SK-N-SH (cell line): ENCODE measurements at regions of chr3 and their contacts with region 1.

Region 1: GRCh38 chr3:195522254-195523023 is 20.7 kb downstream of the PPP1R2 start:
- DNase-seq: peak; percentile 61
- H3K4me3 ChIP-seq: no peak overlapping the region
- H3K27ac ChIP-seq: no peak overlapping the region
- H3K4me1 ChIP-seq: no peaks in the 10 kb centered on the region
- H3K27me3 ChIP-seq: no peaks in the 10 kb centered on the region
- CTCF ChIP-seq: peak; percentile 85
- EP300 ChIP-seq: no peak
- RAD21 ChIP-seq: peak; percentile 87

Region 2: GRCh38 chr3:195542698-195543499 is 20.5 kb after region 1 on chr3 and contains the start of gene PPP1R2:
- CTCF ChIA-PET with region 1: interaction called, 10 read pairs
- POLR2A ChIA-PET with region 1: no interaction called
- DNase-seq: peak; percentile 98
- H3K4me3 ChIP-seq: peak within 1 kb of the TSS; percentile 89 to 94
- H3K27ac ChIP-seq: peak within 1 kb of the TSS; percentile 68 to 78
- H3K4me1 ChIP-seq: peaks cover 23 to 24% of the 10 kb centered on the region in 2 experiments
- H3K27me3 ChIP-seq: no peaks in the 10 kb centered on the region
- CTCF ChIP-seq: no peak
- EP300 ChIP-seq: no peak
- RAD21 ChIP-seq: no peak
- polyA plus RNA-seq, gene PPP1R2: 6.9 and 8.1 TPM in 2 replicates